ENCODE measurements at regions of chr9 and their contacts with region 1.

Region 1: DNA sequence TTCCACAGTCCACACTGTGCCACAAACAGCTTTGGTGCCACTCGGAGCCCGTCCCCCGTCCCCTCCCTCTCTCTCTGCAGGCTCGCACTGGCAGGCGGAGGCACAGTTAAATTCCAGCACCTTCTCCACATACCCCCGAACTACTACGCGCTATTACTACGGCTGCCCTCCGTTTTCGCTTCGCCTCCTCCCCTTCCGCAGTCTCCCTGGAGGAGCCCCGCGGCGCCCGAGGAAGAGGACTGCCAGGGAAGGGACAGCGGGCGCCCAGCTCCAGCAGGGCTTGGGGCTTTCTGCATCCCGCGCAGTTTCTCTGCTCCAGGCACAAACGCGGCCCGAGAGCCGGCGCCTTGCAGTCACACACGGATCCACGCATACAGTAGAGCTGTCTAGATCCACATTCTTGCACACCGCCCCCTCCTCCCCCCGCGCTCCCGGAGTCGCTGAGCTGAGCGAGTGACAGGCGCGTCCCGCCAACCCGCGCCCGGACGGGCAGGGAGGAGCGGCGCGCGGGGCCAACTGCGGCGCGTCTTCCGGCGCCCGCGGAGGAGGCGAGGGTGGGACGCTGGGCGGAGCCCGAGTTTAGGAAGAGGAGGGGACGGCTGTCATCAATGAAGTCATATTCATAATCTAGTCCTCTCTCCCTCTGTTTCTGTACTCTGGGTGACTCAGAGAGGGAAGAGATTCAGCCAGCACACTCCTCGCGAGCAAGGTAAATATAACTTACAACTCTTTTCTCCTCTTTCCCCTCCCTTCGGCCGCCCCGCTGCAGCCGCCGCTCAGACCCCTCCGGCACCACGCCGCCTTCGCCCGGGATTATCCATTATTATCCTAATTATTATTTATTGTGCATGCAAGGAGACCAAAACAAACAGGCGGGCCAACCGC is at the start of gene SMARCA2:
- DNase-seq: peak; percentile 97 to 99 (median 98)
- H3K4me3 ChIP-seq: peak within 1 kb of the TSS; percentile 59 to 99 (median 90)
- H3K27ac ChIP-seq: peak within 1 kb of the TSS; percentile 89 to 99 (median 98)
- H3K27me3 ChIP-seq: no peaks in the 10 kb centered on the region
- CTCF ChIP-seq: peak in 23 of 56 donors; percentile 5 to 46 (median 18)
- total RNA-seq, gene SMARCA2: 186 to 408 (median 285) TPM

Region 2: GRCh38 chr9:1946526-1947283 is 68.2 kb before region 1 on chr9:
- intact Hi-C with region 1: loop called in 1 of 2 experiments (anchors 5 kb)
- DNase-seq: no peak
- H3K4me3 ChIP-seq: peak overlapping the region in 3 of 59 donors; percentile 0 to 39 (median 13)
- H3K27ac ChIP-seq: no peak overlapping the region
- H3K27me3 ChIP-seq: peaks cover 0 to 3% (median 0%) of the 10 kb centered on the region in 45 donors
- CTCF ChIP-seq: no peak

Region 3: GRCh38 chr9:2055203-2055658 is 40.3 kb after region 1 on chr9:
- intact Hi-C with region 1: loop called in 1 of 2 experiments (anchors 5 kb)
- DNase-seq: no peak
- H3K4me3 ChIP-seq: no peak overlapping the region
- H3K27ac ChIP-seq: peak overlapping the region in 38 of 59 donors; percentile 8 to 80 (median 48)
- H3K27me3 ChIP-seq: no peaks in the 10 kb centered on the region
- CTCF ChIP-seq: no peak

Region 4: GRCh38 chr9:2087500-2088313 is 72.8 kb after region 1 on chr9:
- intact Hi-C with region 1: loop called in 1 of 2 experiments (anchors 2 kb)
- DNase-seq: no peak
- H3K4me3 ChIP-seq: no peak overlapping the region
- H3K27ac ChIP-seq: peak overlapping the region in 28 of 59 donors; percentile 2 to 82 (median 25)
- H3K27me3 ChIP-seq: no peaks in the 10 kb centered on the region
- CTCF ChIP-seq: peak; percentile 29 to 75 (median 62)

Region 5: DNA sequence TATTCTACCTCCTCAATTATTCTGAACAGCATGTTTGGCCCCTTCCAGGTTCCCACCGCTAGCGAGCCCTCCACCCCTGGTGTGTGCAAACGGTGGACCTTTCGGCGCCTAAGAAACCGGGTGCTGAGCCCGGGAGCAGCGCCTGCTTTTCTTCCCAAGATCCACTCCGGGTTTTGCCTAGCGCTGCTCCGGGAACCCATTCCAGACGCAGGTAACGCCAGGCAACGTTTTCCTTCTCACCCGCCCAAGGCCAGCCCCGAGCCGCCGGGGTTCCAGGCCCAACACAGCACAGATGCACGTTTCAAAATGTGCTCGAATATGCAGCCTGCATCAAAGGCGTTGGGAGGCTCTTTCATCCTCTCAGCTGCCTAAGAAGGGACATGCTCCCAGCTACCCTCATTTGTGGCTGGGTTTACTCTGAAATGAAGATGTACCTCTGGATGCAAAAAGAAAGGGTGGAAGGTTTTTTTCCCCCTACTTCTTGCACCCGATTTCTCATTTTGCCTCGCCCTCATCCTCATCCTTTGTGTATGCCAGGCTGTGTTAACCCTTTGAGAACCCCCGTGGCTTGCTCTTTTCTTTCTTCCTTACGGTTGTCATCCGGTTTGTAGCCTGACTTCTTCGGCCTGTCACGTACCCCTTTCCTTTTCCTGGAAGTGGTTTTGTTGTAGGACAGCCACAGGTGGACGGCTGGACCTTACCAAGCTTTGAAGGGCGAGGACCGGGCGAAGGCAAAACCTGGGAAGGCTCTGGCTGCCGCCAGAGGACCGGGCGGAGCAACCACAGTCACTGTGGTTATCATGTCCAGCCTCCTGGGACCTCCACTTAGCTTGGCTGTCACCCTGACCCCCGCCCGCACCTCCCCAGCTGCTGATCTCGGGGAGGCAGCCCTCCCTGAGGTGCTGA is 227.2 kb after region 1 on chr9:
- intact Hi-C with region 1: loop called in 1 of 2 experiments (anchors 10 kb)
- DNase-seq: peak; percentile 77 to 93 (median 88)
- H3K4me3 ChIP-seq: peak overlapping the region; percentile 37 to 82 (median 65)
- H3K27ac ChIP-seq: peak overlapping the region; percentile 32 to 94 (median 87)
- H3K27me3 ChIP-seq: no peaks in the 10 kb centered on the region
- CTCF ChIP-seq: peak in 17 of 56 donors; percentile 2 to 48 (median 26)

Measured in dorsolateral prefrontal cortex (tissue), 120 donors.